HCT116 (cell line): ENCODE measurements at regions of chr7 and their contacts with region 1.

Region 1: GRCh38 chr7:80047856-80048459 is 86.7 kb upstream of the GNAI1 start:
- DNase-seq: no peak
- ATAC-seq: peak; percentile 58; the same call in 1 of the 2 replicates
- H3K4me3 ChIP-seq: no peak overlapping the region
- H3K27ac ChIP-seq: no peak overlapping the region
- H3K4me1 ChIP-seq: no peaks in the 10 kb centered on the region
- H3K27me3 ChIP-seq: no peaks in the 10 kb centered on the region
- CTCF ChIP-seq: peak; percentile 15 to 58 (median 48); a peak in 3 of 6 replicates
- POLR2A ChIP-seq: no peak
- RAD21 ChIP-seq: peak; percentile 68

Region 2: GRCh38 chr7:78587443-78588044 is 1460.4 kb before region 1 on chr7:
- CTCF ChIA-PET with region 1: no interaction called
- POLR2A ChIA-PET with region 1: no interaction called
- RAD21 ChIA-PET with region 1: no interaction called
- intact Hi-C with region 1: loop called (anchors 10 kb)
- DNase-seq: peak; percentile 6
- ATAC-seq: peak; percentile 67
- H3K4me3 ChIP-seq: no peak overlapping the region
- H3K27ac ChIP-seq: no peak overlapping the region
- H3K4me1 ChIP-seq: no peaks in the 10 kb centered on the region
- H3K27me3 ChIP-seq: 0 out of 2 replicates have a peak, but pooled peaks cover 3% of the 10 kb centered on the region
- CTCF ChIP-seq: peak; percentile 54 to 79 (median 55); a peak in 4 of 6 replicates
- POLR2A ChIP-seq: no peak
- RAD21 ChIP-seq: peak; percentile 74

Region 3: GRCh38 chr7:79272066-79272669 is 775.8 kb before region 1 on chr7:
- CTCF ChIA-PET with region 1: interaction called, 3 read pairs
- POLR2A ChIA-PET with region 1: no interaction called
- RAD21 ChIA-PET with region 1: no interaction called
- intact Hi-C with region 1: loop called (anchors 5 kb)
- DNase-seq: peak; percentile 39
- ATAC-seq: peak; percentile 69
- H3K4me3 ChIP-seq: no peak overlapping the region
- H3K27ac ChIP-seq: no peak overlapping the region
- H3K4me1 ChIP-seq: no peaks in the 10 kb centered on the region
- H3K27me3 ChIP-seq: no peaks in the 10 kb centered on the region
- CTCF ChIP-seq: peak; percentile 47 to 67 (median 64)
- POLR2A ChIP-seq: no peak
- RAD21 ChIP-seq: peak; percentile 59

Region 4: DNA sequence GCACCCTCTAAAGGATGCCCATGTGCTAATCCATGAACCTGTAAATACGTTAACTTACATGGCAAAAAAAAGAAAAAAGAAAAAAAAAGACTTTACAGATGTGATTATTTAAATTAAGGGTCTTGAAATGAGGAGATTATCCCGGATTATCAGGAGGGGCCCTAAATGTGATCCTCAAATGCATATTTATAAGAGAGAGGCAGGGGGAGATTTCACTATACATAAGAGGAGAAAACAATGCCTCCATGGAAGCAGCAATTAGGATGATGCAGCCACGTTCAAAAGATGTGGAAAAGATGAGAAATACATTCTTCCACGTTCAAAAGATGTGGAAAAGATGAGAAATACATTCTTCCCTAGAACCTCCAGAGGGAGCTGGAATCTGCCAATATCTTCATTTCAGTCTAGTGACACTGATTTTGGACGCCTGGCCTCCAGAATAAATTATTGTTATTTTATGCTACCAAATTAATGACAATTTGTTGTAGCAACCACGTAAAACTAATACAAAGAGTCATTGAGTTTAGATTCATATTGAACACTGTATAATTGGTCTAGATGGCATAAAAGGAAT is 241.7 kb before region 1 on chr7:
- CTCF ChIA-PET with region 1: interaction called, 6 read pairs
- POLR2A ChIA-PET with region 1: no interaction called
- RAD21 ChIA-PET with region 1: no interaction called
- intact Hi-C with region 1: loop called (anchors 1 kb)
- DNase-seq: peak; percentile 19
- ATAC-seq: peak; percentile 78
- H3K4me3 ChIP-seq: no peak overlapping the region
- H3K27ac ChIP-seq: no peak overlapping the region
- H3K4me1 ChIP-seq: no peaks in the 10 kb centered on the region
- H3K27me3 ChIP-seq: no peaks in the 10 kb centered on the region
- CTCF ChIP-seq: peak; percentile 29 to 50 (median 31); a peak in 4 of 6 replicates
- POLR2A ChIP-seq: no peak
- RAD21 ChIP-seq: peak; percentile 64